ENCODE measurements at regions of chr9 and their contacts with region 1.

Region 1: DNA sequence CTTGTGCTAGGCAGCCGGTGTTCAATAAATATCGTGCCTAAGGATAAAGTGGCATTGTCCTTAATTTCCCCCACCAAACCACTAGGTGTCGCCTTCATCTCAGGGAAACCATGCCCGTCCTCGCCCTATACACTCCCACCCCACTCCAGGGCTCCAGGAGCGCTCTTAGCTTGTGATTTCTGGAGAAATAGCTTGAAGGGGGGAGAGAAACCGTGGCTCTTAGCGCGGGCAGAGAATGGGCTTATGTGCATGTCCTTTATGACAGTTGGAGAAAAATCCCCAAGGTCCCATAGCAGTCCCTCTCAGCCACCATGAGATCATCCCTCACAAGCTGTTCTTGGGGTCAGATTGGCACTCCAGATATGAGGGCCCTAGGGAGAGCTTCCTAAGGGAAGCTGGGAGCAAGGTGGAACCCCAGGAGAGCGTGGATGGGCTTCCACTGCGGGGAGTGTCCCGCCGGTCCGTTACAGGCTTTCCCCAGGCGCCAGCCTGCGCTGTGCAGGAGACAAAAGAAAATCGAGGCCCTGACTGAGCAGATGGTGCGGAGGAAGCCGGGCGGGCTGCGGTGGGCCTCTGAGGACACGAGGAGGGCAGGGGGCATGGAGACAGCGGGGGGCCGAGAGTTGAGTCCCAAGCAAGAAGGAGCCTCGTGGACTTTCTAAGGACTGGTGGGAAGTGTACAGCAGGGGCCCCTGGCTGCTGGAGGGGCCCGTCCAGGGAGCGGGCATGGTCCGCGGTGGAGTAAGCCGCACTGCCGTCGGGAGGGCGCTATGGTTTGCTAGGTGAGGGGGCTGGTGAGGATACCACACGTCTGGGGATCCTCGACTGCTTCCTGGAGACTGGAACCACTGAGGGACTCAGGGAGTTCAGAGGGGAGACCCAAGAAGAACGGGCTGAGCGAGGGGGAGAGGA is 750 bp upstream of the NPR2 start:
- DNase-seq: peak; percentile 63 to 79
- ATAC-seq: peak; percentile 78 to 89 (median 87)
- H3K4me3 ChIP-seq: peak overlapping the region; percentile 79
- H3K27ac ChIP-seq: peak overlapping the region; percentile 88
- H3K4me1 ChIP-seq: peaks cover 35% of the 10 kb centered on the region
- H3K27me3 ChIP-seq: no peaks in the 10 kb centered on the region
- CTCF ChIP-seq: peak; percentile 86

Region 2: GRCh38 chr9:35732122-35732799 is 58.4 kb before region 1 on chr9 and contains the starts of genes CREB3 and TLN1:
- intact Hi-C with region 1: no loop called
- DNase-seq: peak; percentile 98 to 99
- ATAC-seq: peak; percentile 84 to 87 (median 86)
- H3K4me3 ChIP-seq: peak within 1 kb of the TSS; percentile 82
- H3K27ac ChIP-seq: peak within 1 kb of the TSS; percentile 98
- H3K4me1 ChIP-seq: peaks cover 47% of the 10 kb centered on the region
- H3K27me3 ChIP-seq: no peaks in the 10 kb centered on the region
- CTCF ChIP-seq: no peak
- total RNA-seq, gene CREB3: 16.1 to 22.4 (median 20.5) TPM
- total RNA-seq, gene TLN1: 146 to 212 (median 152) TPM

Region 3: DNA sequence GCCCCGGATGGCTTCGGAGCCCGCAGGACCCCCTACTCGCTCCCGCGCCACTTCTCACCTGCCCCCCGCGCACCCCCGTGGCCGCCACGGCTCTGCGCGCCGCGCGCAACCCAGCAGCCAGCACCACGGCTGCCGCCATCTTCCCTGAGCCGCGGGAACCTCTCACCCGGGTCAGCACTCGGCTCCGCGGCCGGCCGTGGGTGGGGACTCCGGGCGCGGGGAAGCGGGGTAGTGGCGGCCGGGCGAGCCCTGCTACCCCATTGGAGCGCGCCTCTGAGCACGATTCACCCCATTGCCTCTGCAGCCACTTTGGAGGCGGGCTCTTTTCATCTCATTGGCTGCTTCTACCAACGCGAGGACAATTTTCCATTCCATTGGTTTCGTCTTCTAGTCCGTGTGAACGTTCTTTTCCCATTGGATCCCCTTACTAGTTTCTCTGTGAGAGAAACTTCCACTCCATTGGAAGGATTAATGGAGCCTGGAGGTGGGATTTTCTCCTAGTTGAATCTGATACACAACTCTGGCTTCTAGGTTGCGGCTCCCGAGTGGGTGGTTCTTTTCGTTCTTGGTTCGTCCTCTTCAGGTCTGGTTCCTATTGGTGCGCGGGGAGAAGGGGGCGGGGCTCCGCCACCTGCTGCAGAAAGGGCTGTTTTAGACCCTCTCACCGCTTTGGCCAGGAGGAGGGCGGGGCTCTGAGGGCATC is 24.4 kb after region 1 on chr9 and contains the start of gene HINT2:
- intact Hi-C with region 1: loop called in 1 of 2 experiments (anchors 2 kb)
- DNase-seq: peak; percentile 95 to 96
- ATAC-seq: peak; percentile 90 to 93 (median 91)
- H3K4me3 ChIP-seq: peak within 1 kb of the TSS; percentile 93
- H3K27ac ChIP-seq: peak within 1 kb of the TSS; percentile 97
- H3K4me1 ChIP-seq: peaks cover 37% of the 10 kb centered on the region
- H3K27me3 ChIP-seq: no peaks in the 10 kb centered on the region
- CTCF ChIP-seq: no peak
- total RNA-seq, gene HINT2: 36.5 to 53.9 (median 42.3) TPM

Region 4: DNA sequence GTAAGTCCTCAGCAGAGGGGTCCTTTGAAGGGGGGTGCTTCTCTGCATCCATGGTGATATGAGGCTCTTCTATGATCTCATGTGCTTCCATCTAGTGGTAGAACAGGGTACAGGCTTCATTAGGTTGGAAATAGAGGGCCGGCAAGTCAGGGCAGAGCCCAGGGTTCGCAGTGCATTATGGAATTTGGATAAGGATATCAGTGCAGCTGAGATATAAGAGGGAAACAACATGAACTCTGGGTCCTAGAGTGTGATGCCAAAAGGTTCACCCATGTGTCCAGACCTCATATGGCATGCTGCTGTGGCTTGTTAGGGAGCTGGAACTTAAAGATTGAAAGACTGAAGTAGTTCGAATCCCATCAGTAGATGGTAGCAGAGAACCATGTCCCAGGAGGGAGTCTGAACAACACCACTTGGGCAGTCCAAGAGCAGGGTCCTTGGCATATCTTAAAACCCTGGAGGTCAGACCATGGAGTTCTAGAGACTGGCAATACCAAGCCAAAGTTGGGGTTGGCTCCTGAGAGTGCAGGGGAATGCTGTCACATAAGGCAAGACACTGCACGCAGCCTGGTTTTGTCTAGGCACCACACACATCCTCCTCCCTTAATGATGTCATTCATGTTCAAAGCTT is 35.5 kb after region 1 on chr9:
- intact Hi-C with region 1: loop called (anchors 1 kb)
- DNase-seq: no peak
- ATAC-seq: peak; percentile 43 to 69 (median 56)
- H3K4me3 ChIP-seq: no peak overlapping the region
- H3K27ac ChIP-seq: no peak overlapping the region
- H3K4me1 ChIP-seq: peaks cover 19% of the 10 kb centered on the region
- H3K27me3 ChIP-seq: no peaks in the 10 kb centered on the region
- CTCF ChIP-seq: peak; percentile 76

Region 5: DNA sequence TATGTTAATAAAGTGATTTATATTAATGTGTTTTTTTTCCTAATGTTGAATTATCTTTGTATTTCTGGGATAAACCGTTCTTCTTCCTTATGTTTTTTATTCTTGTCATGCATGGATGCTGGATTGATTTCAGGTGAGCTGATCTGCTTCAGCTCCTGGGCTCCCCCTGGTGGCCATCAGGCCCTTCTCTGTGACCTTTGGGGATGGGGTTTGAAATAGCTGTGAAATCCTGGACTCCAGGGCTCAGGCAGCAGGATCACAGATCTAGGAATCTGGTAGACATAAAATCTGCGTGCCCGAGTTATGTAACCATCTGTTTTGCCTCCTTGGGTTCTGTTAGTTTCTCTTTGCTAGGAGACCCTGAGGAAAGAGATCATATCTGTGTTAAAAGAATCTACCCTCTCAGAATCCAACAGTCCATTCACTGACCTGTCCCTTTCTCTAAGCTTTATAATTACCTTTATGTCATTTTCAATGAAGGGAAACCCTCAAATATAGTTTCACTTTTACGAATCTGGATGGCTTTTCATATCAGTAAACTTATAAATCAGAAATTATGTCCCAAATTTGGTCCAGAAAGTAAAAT is 91.7 kb after region 1 on chr9:
- intact Hi-C with region 1: loop called (anchors 1 to 2 kb)
- DNase-seq: peak; percentile 86 to 92
- ATAC-seq: peak; percentile 79 to 97 (median 86)
- H3K4me3 ChIP-seq: no peak overlapping the region
- H3K27ac ChIP-seq: no peak overlapping the region
- H3K4me1 ChIP-seq: no peaks in the 10 kb centered on the region
- H3K27me3 ChIP-seq: no peaks in the 10 kb centered on the region
- CTCF ChIP-seq: peak; percentile 97

Region 6: DNA sequence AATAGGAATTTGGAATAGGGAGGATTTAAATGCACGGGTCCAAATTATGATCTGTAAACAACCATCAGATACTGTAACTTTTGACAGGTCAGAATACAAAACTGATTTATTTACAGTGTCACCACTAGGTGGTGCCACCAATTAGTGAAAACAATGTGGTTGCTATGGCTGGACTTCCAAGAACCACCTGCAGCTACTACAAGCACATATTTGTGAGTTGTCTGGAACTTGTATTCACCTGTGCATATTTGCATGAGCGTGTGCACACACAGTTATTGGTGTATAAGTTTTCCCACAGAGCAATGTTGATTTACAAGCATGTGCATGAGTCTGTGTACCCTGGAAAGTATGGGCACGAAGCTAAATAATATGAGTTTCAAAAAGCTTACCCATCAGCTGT is 112.4 kb after region 1 on chr9:
- intact Hi-C with region 1: no loop called
- DNase-seq: no peak
- ATAC-seq: peak in 1 of 4 donors; percentile 33
- H3K4me3 ChIP-seq: no peak overlapping the region
- H3K27ac ChIP-seq: no peak overlapping the region
- H3K4me1 ChIP-seq: peaks cover 23% of the 10 kb centered on the region
- H3K27me3 ChIP-seq: no peaks in the 10 kb centered on the region
- CTCF ChIP-seq: peak; percentile 80

Measured in psoas muscle (tissue), 8 donors.